HepG2 (cell line): ENCODE measurements at regions of chr13 and their contacts with region 1.

Region 1: DNA sequence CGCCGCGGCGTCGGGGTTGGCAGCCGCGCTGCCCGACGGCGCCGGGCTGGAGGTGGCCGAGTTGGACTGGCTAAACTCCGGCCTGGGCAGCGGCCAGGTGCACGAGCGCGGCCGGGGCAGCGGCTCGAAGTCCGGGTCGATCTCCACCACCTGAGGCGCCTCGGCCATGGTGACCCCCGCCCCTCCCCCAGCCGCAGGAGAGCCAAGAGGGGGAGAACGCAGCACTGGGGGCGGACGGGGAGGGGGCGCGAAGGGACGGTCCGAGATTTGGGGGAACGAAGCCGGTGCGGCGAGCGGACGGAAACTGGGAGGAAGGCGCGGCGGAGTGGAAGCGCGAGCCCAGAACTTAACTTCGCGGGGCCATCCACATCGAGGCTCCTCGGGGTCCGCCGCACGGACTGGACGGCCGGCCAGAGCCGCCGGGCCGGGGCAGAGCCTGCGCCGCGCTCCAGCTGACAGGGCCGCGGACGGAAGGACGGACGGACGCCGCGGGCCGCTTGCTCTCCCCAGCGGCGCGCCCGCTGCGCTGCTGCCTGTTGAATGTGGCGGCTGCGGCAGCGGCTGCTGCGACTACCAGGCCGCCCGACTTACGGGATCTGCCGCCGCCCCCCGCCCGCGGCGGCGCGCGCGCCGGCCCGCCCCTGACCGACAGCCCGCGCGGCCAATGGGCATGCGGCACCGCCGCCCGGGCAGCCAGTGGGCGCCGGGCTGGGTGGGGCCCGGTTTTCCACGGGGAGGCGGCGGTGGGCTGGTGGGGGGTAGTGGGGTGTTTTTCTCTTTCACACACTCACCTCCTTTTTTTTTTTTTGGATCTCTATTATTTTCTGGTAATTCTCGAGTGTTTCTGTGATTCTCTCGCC is at the start of gene FOXO1:
- DNase-seq: peak; percentile 51
- ATAC-seq: peak; percentile 77
- H3K4me3 ChIP-seq: peak within 1 kb of the TSS; percentile 96 to 99 (median 99)
- H3K27ac ChIP-seq: peak within 1 kb of the TSS; percentile 88
- H3K4me1 ChIP-seq: peaks cover 43% of the 10 kb centered on the region
- H3K27me3 ChIP-seq: no peaks in the 10 kb centered on the region; a peak in 1 of 5 replicates
- CTCF ChIP-seq: 0 out of 2 replicates have a peak, but pooled peaks have one; percentile 5
- EP300 ChIP-seq: no peak
- POLR2A ChIP-seq: peak; percentile 82 to 94
- RAD21 ChIP-seq: peak; percentile 52; the same call in 1 of the 2 replicates
- total RNA-seq, gene FOXO1: 8.1 and 13.8 TPM in 2 replicates

Region 2: DNA sequence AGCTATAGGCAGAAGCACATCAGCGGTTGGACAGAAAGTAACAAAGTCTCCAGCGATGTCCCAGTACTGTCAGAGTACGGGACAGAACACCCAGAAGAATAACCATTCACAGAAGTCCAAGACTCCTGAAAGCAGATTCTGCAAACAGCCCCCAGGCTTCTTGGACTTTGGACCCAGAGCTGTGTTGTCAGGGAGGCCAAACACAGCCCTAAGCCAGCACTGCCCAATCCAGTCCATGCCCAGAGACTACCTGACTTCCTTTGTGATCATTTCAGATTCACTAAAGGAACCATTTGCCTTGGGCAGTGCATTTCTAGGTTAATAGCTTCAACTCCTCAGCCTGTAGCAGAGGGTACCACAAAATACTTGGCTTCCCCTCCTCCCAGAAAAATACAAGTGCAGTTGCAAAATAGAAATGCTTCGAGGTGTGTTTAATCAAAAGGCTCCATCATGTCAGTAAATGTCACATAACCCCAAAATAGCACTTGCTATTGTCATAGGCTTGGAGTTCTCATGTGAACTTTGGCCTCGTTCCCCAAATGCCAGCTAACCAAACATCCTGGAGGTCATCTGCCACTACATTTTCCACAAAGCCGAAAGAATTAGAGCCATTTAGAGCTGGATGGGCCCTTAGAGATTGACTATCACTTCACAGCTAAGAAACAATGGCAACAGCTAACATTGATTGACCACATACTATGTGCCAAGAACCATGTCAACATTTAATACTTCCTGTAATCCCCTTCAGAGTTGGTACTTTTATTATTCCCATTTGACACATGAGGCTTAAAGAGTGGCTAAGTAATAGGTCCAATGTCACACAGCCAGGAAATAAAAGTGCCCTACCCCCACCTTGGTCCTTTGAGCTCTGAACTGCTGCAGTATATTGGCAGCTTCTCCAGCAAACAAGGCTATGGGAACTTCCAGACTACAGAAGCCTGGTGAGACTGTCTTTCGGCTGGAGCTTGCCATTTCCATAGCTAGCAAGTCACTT is 329.8 kb before region 1 on chr13:
- CTCF ChIA-PET with region 1: no interaction called
- POLR2A ChIA-PET with region 1: interaction called, 6 read pairs
- in situ Hi-C with region 1: loop called (anchors 10 kb)
- intact Hi-C with region 1: no loop called
- DNase-seq: peak; percentile 91
- ATAC-seq: peak; percentile 83
- H3K4me3 ChIP-seq: peak overlapping the region in 1 of 3 experiments; percentile 19; a peak in 2 of 6 replicates
- H3K27ac ChIP-seq: peak overlapping the region; percentile 80
- H3K4me1 ChIP-seq: peaks cover 87% of the 10 kb centered on the region
- H3K27me3 ChIP-seq: no peaks in the 10 kb centered on the region
- CTCF ChIP-seq: no peak
- EP300 ChIP-seq: peak in 1 of 2 experiments; percentile 28; a peak in 1 of 4 replicates
- POLR2A ChIP-seq: no peak
- RAD21 ChIP-seq: no peak

Region 3: GRCh38 chr13:40480012-40480914 is 186.0 kb before region 1 on chr13:
- CTCF ChIA-PET with region 1: no interaction called
- POLR2A ChIA-PET with region 1: no interaction called
- in situ Hi-C with region 1: no loop called
- intact Hi-C with region 1: loop called (anchors 5 kb)
- DNase-seq: peak; percentile 62
- ATAC-seq: peak; percentile 47
- H3K4me3 ChIP-seq: peak overlapping the region in 2 of 3 experiments; percentile 3 to 34; a peak in 3 of 6 replicates
- H3K27ac ChIP-seq: peak overlapping the region; percentile 49
- H3K4me1 ChIP-seq: peaks cover 92% of the 10 kb centered on the region
- H3K27me3 ChIP-seq: no peaks in the 10 kb centered on the region
- CTCF ChIP-seq: no peak; the same call in 1 of the 2 replicates
- EP300 ChIP-seq: no peak
- POLR2A ChIP-seq: no peak
- RAD21 ChIP-seq: no peak

Region 4: GRCh38 chr13:40564342-40565001 is 101.8 kb before region 1 on chr13:
- CTCF ChIA-PET with region 1: no interaction called
- POLR2A ChIA-PET with region 1: interaction called, 13 read pairs
- in situ Hi-C with region 1: loop called (anchors 5 kb)
- intact Hi-C with region 1: loop called (anchors 2 kb)
- DNase-seq: peak; percentile 96
- ATAC-seq: peak; percentile 78
- H3K4me3 ChIP-seq: peak overlapping the region; percentile 35 to 69 (median 44)
- H3K27ac ChIP-seq: peak overlapping the region; percentile 94
- H3K4me1 ChIP-seq: peaks cover 83% of the 10 kb centered on the region
- H3K27me3 ChIP-seq: no peaks in the 10 kb centered on the region
- CTCF ChIP-seq: peak; percentile 57
- EP300 ChIP-seq: peak in 1 of 2 experiments; percentile 75; a peak in 3 of 4 replicates
- POLR2A ChIP-seq: peak; percentile 40 to 59; a peak in 3 of 4 replicates
- RAD21 ChIP-seq: peak; percentile 54; the same call in 1 of the 2 replicates

Region 5: DNA sequence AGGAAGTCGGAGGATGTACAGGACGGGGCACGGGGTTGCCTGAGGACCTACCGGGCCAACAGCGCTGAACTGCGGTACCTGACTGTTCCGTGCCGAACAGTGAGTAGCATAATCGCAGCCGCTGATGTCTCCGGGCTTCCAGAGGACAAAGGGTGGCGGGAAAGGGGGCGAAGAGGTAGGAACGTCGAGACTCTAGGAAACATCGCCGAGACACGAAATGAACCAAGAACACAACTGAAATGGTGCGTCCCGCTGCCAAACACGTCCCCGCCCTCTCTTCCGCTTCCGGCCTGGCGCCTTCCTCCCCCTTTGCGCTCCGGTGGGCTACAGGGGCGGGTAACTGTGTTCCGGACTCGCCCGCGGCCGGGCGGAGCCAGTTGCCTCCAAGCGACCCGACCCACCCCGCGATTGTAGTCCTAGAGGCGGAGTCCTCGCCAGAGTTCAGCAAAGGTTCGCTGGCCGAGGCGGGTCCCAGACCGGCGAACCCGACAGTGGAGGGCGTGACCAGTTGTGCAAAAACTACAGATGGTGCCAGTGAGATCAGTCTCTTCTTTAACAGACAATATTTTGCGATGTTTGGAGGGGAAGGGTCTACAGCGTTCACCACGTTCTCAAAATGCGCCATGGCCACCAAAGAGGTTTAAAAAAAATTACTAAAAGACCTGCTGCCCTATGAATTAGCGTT is 104.8 kb after region 1 on chr13 and contains the start of gene MRPS31:
- CTCF ChIA-PET with region 1: no interaction called
- POLR2A ChIA-PET with region 1: no interaction called
- in situ Hi-C with region 1: no loop called
- intact Hi-C with region 1: loop called (anchors 5 kb)
- DNase-seq: peak; percentile 92
- ATAC-seq: peak; percentile 99
- H3K4me3 ChIP-seq: peak within 1 kb of the TSS; percentile 86 to 97 (median 94)
- H3K27ac ChIP-seq: peak within 1 kb of the TSS; percentile 74
- H3K4me1 ChIP-seq: peaks cover 53% of the 10 kb centered on the region
- H3K27me3 ChIP-seq: no peaks in the 10 kb centered on the region; a peak in 1 of 5 replicates
- CTCF ChIP-seq: peak; percentile 44
- EP300 ChIP-seq: peak; percentile 50 to 73; a peak in 3 of 4 replicates
- POLR2A ChIP-seq: peak; percentile 79 to 97
- RAD21 ChIP-seq: peak; percentile 72
- total RNA-seq, gene MRPS31: 34.1 and 43.5 TPM in 2 replicates

Region 6: GRCh38 chr13:41159174-41159573 is 492.9 kb after region 1 on chr13:
- CTCF ChIA-PET with region 1: no interaction called
- POLR2A ChIA-PET with region 1: no interaction called
- in situ Hi-C with region 1: no loop called
- intact Hi-C with region 1: no loop called
- DNase-seq: no peak
- ATAC-seq: no peak
- H3K4me3 ChIP-seq: no peak overlapping the region
- H3K27ac ChIP-seq: no peak overlapping the region
- H3K4me1 ChIP-seq: no peaks in the 10 kb centered on the region
- H3K27me3 ChIP-seq: no peaks in the 10 kb centered on the region
- CTCF ChIP-seq: no peak
- EP300 ChIP-seq: no peak
- POLR2A ChIP-seq: no peak
- RAD21 ChIP-seq: no peak